Breast epithelium (tissue), 4 donors: ENCODE measurements at regions of chr1 and their contacts with region 1.

Region 1: GRCh38 chr1:187070076-187070475 is 241.3 kb downstream of the PLA2G4A start:
- DNase-seq: no peak
- H3K4me3 ChIP-seq: no peak overlapping the region
- H3K27ac ChIP-seq: no peak overlapping the region
- H3K4me1 ChIP-seq: no peaks in the 10 kb centered on the region
- H3K27me3 ChIP-seq: no peaks in the 10 kb centered on the region
- CTCF ChIP-seq: no peak
- POLR2A ChIP-seq: no peak

Region 2: GRCh38 chr1:186710696-186711095 is 359.4 kb before region 1 on chr1:
- intact Hi-C with region 1: loop called (anchors 5 kb)
- DNase-seq: no peak
- H3K4me3 ChIP-seq: no peak overlapping the region
- H3K27ac ChIP-seq: no peak overlapping the region
- H3K4me1 ChIP-seq: no peaks in the 10 kb centered on the region
- H3K27me3 ChIP-seq: no peaks in the 10 kb centered on the region
- CTCF ChIP-seq: no peak
- POLR2A ChIP-seq: no peak

Region 3: GRCh38 chr1:188228623-188229022 is 1158.5 kb after region 1 on chr1:
- intact Hi-C with region 1: no loop called
- DNase-seq: no peak
- H3K4me3 ChIP-seq: no peak overlapping the region
- H3K27ac ChIP-seq: no peak overlapping the region
- H3K4me1 ChIP-seq: no peaks in the 10 kb centered on the region
- H3K27me3 ChIP-seq: no peaks in the 10 kb centered on the region
- CTCF ChIP-seq: no peak
- POLR2A ChIP-seq: no peak